Activated CD4-positive, alpha-beta T cell treated with anti-CD3 and anti-CD28 coated beads for 36 hours (primary cell): ENCODE measurements at regions of chr3 and their contacts with region 1.

Region 1: DNA sequence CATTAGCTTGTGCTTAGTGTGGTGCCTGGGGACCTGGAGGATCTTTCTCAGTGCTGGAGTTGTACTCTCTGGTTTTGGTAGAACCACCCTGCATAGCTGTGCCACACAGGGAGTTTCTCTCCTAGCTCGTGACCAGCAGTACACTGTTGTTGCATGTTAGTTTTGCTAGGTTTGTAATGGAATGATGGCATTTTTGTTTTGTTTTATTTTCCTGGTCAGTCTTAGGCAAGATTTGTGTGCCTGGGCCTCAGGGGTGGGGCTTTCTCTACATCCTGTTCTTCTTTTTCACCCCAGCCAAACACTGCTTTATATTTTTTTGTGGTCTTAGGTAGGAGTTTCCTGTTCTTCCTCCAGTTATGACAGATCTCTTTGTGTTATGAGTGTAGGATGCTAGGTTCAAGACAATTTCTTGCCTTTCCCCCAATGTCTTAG is 534.5 kb upstream of the KCNMB2 start:
- DNase-seq: peak; percentile 58
- ATAC-seq: peak; percentile 93
- H3K4me3 Mint-ChIP-seq: no peak overlapping the region
- H3K27ac Mint-ChIP-seq: peak overlapping the region; percentile 80
- H3K4me1 Mint-ChIP-seq: peaks cover 60% of the 10 kb centered on the region
- H3K27me3 Mint-ChIP-seq: no peaks in the 10 kb centered on the region

Region 2: GRCh38 chr3:177597311-177598096 is 404.2 kb before region 1 on chr3:
- CTCF ChIA-PET with region 1: no interaction called
- POLR2A ChIA-PET with region 1: no interaction called
- intact Hi-C with region 1: loop called in 1 of 2 experiments (anchors 5 kb)
- DNase-seq: peak; percentile 51
- ATAC-seq: peak; percentile 68
- H3K4me3 Mint-ChIP-seq: peak overlapping the region; percentile 45
- H3K27ac Mint-ChIP-seq: peak overlapping the region; percentile 88
- H3K4me1 Mint-ChIP-seq: peaks cover 70% of the 10 kb centered on the region
- H3K27me3 Mint-ChIP-seq: no peaks in the 10 kb centered on the region

Region 3: DNA sequence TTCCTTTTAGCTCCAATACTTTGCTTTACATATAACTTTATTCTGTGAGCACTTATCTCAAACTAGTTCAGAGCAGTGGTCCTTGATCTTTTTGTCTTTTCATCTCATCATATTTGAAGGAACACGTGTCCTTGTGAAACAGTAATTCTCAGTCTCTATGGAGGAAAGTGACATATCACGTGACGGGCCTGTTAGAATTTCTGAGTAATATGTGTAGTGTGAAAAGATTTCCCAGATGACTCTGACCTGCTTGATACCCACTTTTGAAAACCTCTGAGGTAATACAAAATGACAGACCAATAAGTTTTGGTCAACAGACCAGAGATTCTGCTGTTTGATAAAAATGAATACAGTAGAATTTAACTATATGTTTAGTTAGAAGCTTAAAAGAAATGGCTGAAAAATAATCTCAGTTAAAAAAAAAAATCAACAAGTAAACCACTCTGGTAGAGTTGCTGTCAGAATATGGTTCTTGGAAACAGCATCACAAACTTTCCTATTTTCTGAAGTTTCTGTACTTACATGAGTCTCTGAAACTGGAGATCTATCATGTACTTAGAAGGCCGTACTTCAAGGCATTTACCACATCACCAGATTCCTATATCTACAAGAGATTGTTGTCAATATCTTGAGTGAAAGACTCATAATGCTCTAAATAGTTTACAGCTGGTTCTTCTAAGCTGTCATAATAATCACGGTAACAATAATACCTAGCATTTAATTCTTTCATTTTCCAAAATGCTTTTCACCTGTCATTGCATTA is 214.2 kb before region 1 on chr3:
- CTCF ChIA-PET with region 1: no interaction called
- POLR2A ChIA-PET with region 1: no interaction called
- intact Hi-C with region 1: loop called in 1 of 2 experiments (anchors 2 kb)
- DNase-seq: peak; percentile 32
- ATAC-seq: peak; percentile 89
- H3K4me3 Mint-ChIP-seq: no peak overlapping the region
- H3K27ac Mint-ChIP-seq: peak overlapping the region; percentile 52
- H3K4me1 Mint-ChIP-seq: peaks cover 26% of the 10 kb centered on the region
- H3K27me3 Mint-ChIP-seq: no peaks in the 10 kb centered on the region

Region 4: GRCh38 chr3:177928156-177928873 is 73.4 kb before region 1 on chr3:
- CTCF ChIA-PET with region 1: no interaction called
- POLR2A ChIA-PET with region 1: no interaction called
- intact Hi-C with region 1: loop called in 1 of 2 experiments (anchors 2 kb)
- DNase-seq: no peak
- ATAC-seq: peak; percentile 79
- H3K4me3 Mint-ChIP-seq: no peak overlapping the region
- H3K27ac Mint-ChIP-seq: no peak overlapping the region
- H3K4me1 Mint-ChIP-seq: peaks cover 18% of the 10 kb centered on the region
- H3K27me3 Mint-ChIP-seq: no peaks in the 10 kb centered on the region